T-cell (primary cell): ENCODE measurements at regions of chr7 and their contacts with region 1.

Region 1: GRCh38 chr7:96508371-96508770 is 186.5 kb upstream of the SLC25A13 start:
- DNase-seq: no peak
- ATAC-seq: no peak
- H3K4me3 ChIP-seq: no peak overlapping the region
- H3K4me3 Mint-ChIP-seq: no peak overlapping the region
- H3K27ac ChIP-seq: no peak overlapping the region
- H3K27ac Mint-ChIP-seq: no peak overlapping the region
- H3K4me1 ChIP-seq: no peaks in the 10 kb centered on the region
- H3K4me1 Mint-ChIP-seq: no peaks in the 10 kb centered on the region
- H3K27me3 ChIP-seq: no peaks in the 10 kb centered on the region
- H3K27me3 Mint-ChIP-seq: peaks cover 23 to 25% of the 10 kb centered on the region in 2 donors

Region 2: GRCh38 chr7:96481796-96482443 is 26.5 kb before region 1 on chr7:
- CTCF ChIA-PET with region 1: no interaction called
- POLR2A ChIA-PET with region 1: no interaction called
- DNase-seq: no peak
- ATAC-seq: no peak
- H3K4me3 ChIP-seq: no peak overlapping the region
- H3K4me3 Mint-ChIP-seq: no peak overlapping the region
- H3K27ac ChIP-seq: no peak overlapping the region
- H3K27ac Mint-ChIP-seq: no peak overlapping the region
- H3K4me1 ChIP-seq: peaks cover 3 to 8% of the 10 kb centered on the region in 2 experiments
- H3K4me1 Mint-ChIP-seq: peaks cover 13 to 29% (median 16%) of the 10 kb centered on the region in 3 donors
- H3K27me3 ChIP-seq: no peaks in the 10 kb centered on the region
- H3K27me3 Mint-ChIP-seq: no peaks in the 10 kb centered on the region

Region 3: GRCh38 chr7:96903906-96904305 is 395.5 kb after region 1 on chr7:
- CTCF ChIA-PET with region 1: interaction called in 1 of 2 experiments, 10 read pairs
- POLR2A ChIA-PET with region 1: no interaction called
- DNase-seq: no peak
- ATAC-seq: no peak
- H3K4me3 ChIP-seq: no peak overlapping the region
- H3K4me3 Mint-ChIP-seq: no peak overlapping the region
- H3K27ac ChIP-seq: no peak overlapping the region
- H3K27ac Mint-ChIP-seq: no peak overlapping the region
- H3K4me1 ChIP-seq: no peaks in the 10 kb centered on the region
- H3K4me1 Mint-ChIP-seq: no peaks in the 10 kb centered on the region
- H3K27me3 ChIP-seq: no peaks in the 10 kb centered on the region
- H3K27me3 Mint-ChIP-seq: peaks cover 8 to 16% of the 10 kb centered on the region in 2 donors